Calu3 (cell line): ENCODE measurements at regions of chr6 and their contacts with region 1.

Region 1: GRCh38 chr6:105484238-105485161 is 81.6 kb upstream of the PREP start:
- DNase-seq: no peak
- H3K4me3 Mint-ChIP-seq: no peak overlapping the region
- H3K27ac Mint-ChIP-seq: no peak overlapping the region
- H3K4me1 Mint-ChIP-seq: peaks cover 11% of the 10 kb centered on the region
- H3K27me3 Mint-ChIP-seq: no peaks in the 10 kb centered on the region
- CTCF ChIP-seq: peak; percentile 57

Region 2: GRCh38 chr6:105941621-105942412 is 457.3 kb after region 1 on chr6:
- CTCF ChIA-PET with region 1: interaction called, 14 read pairs
- intact Hi-C with region 1: no loop called
- DNase-seq: no peak
- H3K4me3 Mint-ChIP-seq: no peak overlapping the region
- H3K27ac Mint-ChIP-seq: no peak overlapping the region
- H3K4me1 Mint-ChIP-seq: no peaks in the 10 kb centered on the region
- H3K27me3 Mint-ChIP-seq: peaks cover 13% of the 10 kb centered on the region
- CTCF ChIP-seq: no peak

Region 3: DNA sequence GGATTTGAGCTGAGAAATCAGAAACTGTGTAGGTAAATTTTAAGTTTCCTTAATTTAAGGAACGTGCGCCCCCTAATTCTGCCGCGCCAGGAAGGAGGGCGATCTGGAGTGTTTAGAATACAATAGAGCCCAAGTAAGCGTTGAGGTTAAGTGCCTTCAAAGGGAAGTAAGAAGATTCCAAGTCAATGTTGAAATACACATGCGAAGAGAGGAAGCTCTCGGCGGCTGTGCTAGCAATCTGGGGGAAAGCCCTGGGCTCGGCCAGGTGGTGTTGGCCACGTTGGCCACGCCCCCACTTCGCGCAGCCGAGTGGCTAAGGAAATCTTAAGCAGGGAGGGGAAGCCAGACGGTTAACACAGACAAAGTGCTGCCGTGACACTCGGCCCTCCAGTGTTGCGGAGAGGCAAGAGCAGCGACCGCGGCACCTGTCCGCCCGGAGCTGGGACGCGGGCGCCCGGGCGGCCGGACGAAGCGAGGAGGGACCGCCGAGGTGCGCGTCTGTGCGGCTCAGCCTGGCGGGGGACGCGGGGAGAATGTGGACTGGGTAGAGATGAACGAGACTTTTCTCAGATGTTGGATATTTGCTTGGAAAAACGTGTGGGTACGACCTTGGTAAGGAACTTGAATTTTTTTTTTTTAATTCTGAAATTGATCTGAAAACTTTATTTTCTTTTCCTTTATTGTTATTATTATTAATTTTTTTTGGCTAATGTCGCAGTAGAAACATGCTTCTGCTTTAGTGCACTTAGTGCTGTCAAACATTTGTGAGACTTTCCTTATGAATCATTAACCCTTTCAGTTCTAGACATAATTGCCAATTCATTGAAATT is 601.7 kb after region 1 on chr6 and contains the start of gene PRDM1:
- CTCF ChIA-PET with region 1: no interaction called
- intact Hi-C with region 1: loop called (anchors 10 kb)
- DNase-seq: peak; percentile 89
- H3K4me3 Mint-ChIP-seq: peak within 1 kb of the TSS; percentile 97
- H3K27ac Mint-ChIP-seq: peak within 1 kb of the TSS; percentile 57
- H3K4me1 Mint-ChIP-seq: peaks cover 28% of the 10 kb centered on the region
- H3K27me3 Mint-ChIP-seq: peaks cover 27% of the 10 kb centered on the region
- CTCF ChIP-seq: no peak
- total RNA-seq, gene PRDM1: 0.40 and 1.1 TPM in 2 replicates

Region 4: GRCh38 chr6:106223300-106223930 is 738.9 kb after region 1 on chr6:
- CTCF ChIA-PET with region 1: interaction called, 4 read pairs
- intact Hi-C with region 1: loop called (anchors 1 kb)
- DNase-seq: peak; percentile 70
- H3K4me3 Mint-ChIP-seq: no peak overlapping the region
- H3K27ac Mint-ChIP-seq: no peak overlapping the region
- H3K4me1 Mint-ChIP-seq: peaks cover 13% of the 10 kb centered on the region
- H3K27me3 Mint-ChIP-seq: no peaks in the 10 kb centered on the region
- CTCF ChIP-seq: peak; percentile 61

Region 5: GRCh38 chr6:106300944-106301343 is 816.4 kb after region 1 on chr6:
- CTCF ChIA-PET with region 1: no interaction called
- intact Hi-C with region 1: loop called (anchors 1 kb)
- DNase-seq: no peak
- H3K4me3 Mint-ChIP-seq: no peak overlapping the region
- H3K27ac Mint-ChIP-seq: no peak overlapping the region
- H3K4me1 Mint-ChIP-seq: peaks cover 7% of the 10 kb centered on the region
- H3K27me3 Mint-ChIP-seq: no peaks in the 10 kb centered on the region
- CTCF ChIP-seq: no peak

Region 6: DNA sequence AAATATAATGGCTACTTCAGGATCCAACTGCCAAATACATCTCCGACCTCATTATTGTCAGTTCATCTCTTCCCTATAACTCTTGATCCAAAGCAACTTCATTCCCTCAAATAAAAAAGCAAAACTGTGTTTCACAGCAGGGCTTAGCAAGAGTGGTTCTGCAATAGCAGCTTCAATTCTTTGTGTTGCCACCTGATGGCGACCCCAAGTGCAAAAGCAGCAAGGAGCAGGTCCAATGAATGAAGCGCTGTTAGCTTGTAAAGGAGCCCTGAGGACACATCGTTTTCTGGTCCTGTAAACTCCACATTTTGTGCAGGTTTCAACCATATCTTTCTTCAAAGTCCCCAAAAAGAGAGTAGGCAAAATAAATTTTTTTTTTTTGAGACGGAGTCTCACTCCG is 1125.2 kb after region 1 on chr6:
- CTCF ChIA-PET with region 1: no interaction called
- intact Hi-C with region 1: no loop called
- DNase-seq: peak; percentile 48
- H3K4me3 Mint-ChIP-seq: no peak overlapping the region
- H3K27ac Mint-ChIP-seq: no peak overlapping the region
- H3K4me1 Mint-ChIP-seq: peaks cover 24% of the 10 kb centered on the region
- H3K27me3 Mint-ChIP-seq: no peaks in the 10 kb centered on the region
- CTCF ChIP-seq: peak; percentile 47